Caco-2 (cell line): ENCODE measurements at regions of chr1 and their contacts with region 1.

Region 1: DNA sequence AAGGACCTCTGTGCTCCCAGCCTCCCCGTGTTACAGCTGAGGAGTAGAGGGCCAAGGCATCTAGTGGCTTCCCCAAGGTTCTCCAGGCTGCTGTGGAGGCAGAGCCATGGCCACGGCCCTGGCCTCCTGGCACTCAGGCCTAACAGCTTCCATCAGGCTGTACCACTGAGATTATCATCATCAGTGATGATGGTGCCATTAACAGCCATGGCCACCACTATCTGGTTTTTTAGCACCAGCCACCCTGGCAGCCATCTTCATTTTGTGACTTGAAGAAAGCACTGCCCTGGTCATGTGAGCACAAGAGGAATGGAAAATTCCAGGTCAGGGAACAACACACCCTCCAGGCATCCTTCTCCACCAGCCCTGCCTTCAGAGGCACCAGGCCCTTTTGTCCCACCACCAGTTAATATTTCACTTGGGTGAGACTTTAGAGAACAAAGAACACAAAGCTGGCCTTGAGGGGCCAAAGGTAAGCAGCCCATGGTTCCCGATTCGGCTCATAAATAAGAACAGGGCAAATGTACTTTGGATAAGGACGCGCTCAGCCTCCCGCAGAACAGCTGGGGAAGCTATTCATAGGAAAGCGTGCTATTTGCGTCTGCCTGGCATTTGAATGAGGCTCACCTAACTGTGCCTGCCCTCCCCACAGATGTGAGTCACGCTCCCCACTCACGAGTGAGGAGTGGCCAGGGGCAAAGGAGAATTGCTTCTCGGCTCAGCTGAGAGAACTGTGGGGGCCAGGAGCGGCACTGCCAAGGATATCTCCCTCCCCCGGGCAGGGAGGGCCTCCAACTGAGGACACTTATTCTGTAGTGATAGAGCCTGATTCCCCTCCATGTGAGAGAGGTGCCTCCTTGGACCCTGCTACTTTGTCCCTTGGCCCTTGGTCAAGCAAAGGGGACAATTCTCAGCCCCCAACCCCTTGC is 95.6 kb downstream of the CD58 start:
- DNase-seq: peak; percentile 85 to 92
- H3K4me3 ChIP-seq: peak overlapping the region; percentile 5; the same call in 1 of the 2 replicates
- H3K4me3 Mint-ChIP-seq: peak overlapping the region; percentile 49
- H3K27ac Mint-ChIP-seq: peak overlapping the region; percentile 70
- H3K4me1 ChIP-seq: peaks cover 65% of the 10 kb centered on the region
- H3K4me1 Mint-ChIP-seq: peaks cover 30% of the 10 kb centered on the region
- H3K27me3 ChIP-seq: no peaks in the 10 kb centered on the region
- H3K27me3 Mint-ChIP-seq: no peaks in the 10 kb centered on the region
- CTCF ChIP-seq: no peak

Region 2: GRCh38 chr1:116151739-116152576 is 323.2 kb before region 1 on chr1:
- CTCF ChIA-PET with region 1: no interaction called
- POLR2A ChIA-PET with region 1: no interaction called
- intact Hi-C with region 1: no loop called
- DNase-seq: peak; percentile 68 to 80
- H3K4me3 ChIP-seq: peak overlapping the region; percentile 38
- H3K4me3 Mint-ChIP-seq: peak overlapping the region; percentile 66
- H3K27ac Mint-ChIP-seq: peak overlapping the region; percentile 75
- H3K4me1 ChIP-seq: peaks cover 40% of the 10 kb centered on the region
- H3K4me1 Mint-ChIP-seq: peaks cover 9% of the 10 kb centered on the region
- H3K27me3 ChIP-seq: no peaks in the 10 kb centered on the region
- H3K27me3 Mint-ChIP-seq: no peaks in the 10 kb centered on the region
- CTCF ChIP-seq: peak; percentile 46 to 79

Region 3: DNA sequence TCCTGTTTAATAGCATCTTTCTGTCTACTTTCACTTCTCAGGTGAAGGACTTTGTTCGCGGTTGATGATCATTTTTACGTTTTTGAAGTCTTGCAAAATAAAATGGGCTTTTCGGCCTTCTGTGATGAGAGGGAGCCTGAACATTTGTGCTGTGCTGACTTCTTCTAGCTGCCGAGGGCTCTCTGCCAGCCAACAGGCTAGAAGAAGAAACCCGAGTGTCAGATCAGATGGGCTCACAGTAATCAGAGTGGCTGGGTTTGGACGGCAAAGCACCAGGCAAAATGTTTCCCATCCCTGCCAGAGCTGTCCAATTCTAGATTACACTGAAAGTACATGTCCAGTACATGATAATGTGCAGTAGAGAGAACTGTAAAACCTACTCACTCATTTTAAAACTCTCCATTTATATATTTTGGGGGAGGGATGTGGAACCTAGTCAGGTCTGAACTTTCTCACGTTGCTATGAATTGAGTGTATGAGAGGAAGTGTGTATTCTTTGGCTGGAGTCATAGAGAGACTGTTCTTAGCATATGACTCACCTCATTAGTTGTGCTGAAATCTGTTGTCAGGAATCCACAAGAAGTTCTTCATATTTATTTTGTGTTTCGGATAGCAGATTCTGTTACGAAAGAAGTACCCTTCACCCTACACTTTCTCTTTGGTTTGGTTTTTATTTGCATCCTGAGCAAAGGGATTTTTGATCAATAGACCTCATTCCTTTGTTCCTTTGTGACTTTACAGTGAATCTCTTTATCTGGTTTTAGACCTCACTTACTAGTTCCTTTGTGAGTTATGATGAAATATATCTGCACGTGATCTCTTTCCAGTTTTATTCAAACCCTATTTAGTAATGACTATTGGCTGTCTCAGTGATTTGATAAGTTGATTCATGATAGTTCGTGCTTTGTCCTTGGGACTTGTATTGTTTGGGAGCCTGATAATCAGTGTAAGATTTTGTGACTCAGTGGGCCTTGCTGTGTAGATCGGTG is 97.3 kb before region 1 on chr1:
- CTCF ChIA-PET with region 1: interaction called, 6 read pairs
- POLR2A ChIA-PET with region 1: no interaction called
- intact Hi-C with region 1: loop called (anchors 5 kb)
- DNase-seq: no peak
- H3K4me3 ChIP-seq: no peak overlapping the region
- H3K4me3 Mint-ChIP-seq: peak overlapping the region; percentile 27
- H3K27ac Mint-ChIP-seq: peak overlapping the region; percentile 63
- H3K4me1 ChIP-seq: peaks cover 62% of the 10 kb centered on the region
- H3K4me1 Mint-ChIP-seq: peaks cover 40% of the 10 kb centered on the region
- H3K27me3 ChIP-seq: no peaks in the 10 kb centered on the region
- H3K27me3 Mint-ChIP-seq: no peaks in the 10 kb centered on the region
- CTCF ChIP-seq: no peak

Region 4: GRCh38 chr1:116433275-116434257 is 41.6 kb before region 1 on chr1:
- CTCF ChIA-PET with region 1: no interaction called
- POLR2A ChIA-PET with region 1: interaction called, 4 read pairs
- intact Hi-C with region 1: loop called (anchors 5 kb)
- DNase-seq: no peak
- H3K4me3 ChIP-seq: no peak overlapping the region
- H3K4me3 Mint-ChIP-seq: peak overlapping the region; percentile 15
- H3K27ac Mint-ChIP-seq: peak overlapping the region; percentile 48
- H3K4me1 ChIP-seq: peaks cover 27% of the 10 kb centered on the region
- H3K4me1 Mint-ChIP-seq: peaks cover 24% of the 10 kb centered on the region
- H3K27me3 ChIP-seq: no peaks in the 10 kb centered on the region
- H3K27me3 Mint-ChIP-seq: no peaks in the 10 kb centered on the region
- CTCF ChIP-seq: no peak

Region 5: DNA sequence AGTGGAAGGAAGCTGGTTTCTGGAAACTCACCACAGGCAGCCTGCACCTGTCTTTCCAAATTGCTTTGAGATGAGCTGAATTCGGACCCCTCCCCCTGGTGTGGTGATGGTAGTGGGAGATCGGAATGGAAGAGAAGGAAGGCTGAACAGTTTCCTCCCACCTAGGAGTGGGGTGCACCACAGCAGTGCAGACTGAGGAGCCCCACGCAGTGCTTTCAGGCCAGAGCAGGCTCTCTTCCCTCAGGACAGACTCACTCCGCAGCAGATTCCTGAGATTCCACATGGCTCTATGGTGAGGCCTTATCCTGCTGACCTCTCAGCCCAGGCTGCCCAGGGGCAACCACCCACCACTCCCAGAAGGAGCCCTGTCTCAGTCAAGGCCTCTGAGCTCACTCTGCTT is 21.3 kb before region 1 on chr1:
- CTCF ChIA-PET with region 1: no interaction called
- POLR2A ChIA-PET with region 1: interaction called, 4 read pairs
- intact Hi-C with region 1: loop called (anchors 1 kb)
- DNase-seq: peak; percentile 66 to 85
- H3K4me3 ChIP-seq: no peak overlapping the region
- H3K4me3 Mint-ChIP-seq: peak overlapping the region; percentile 36
- H3K27ac Mint-ChIP-seq: peak overlapping the region; percentile 93
- H3K4me1 ChIP-seq: peaks cover 60% of the 10 kb centered on the region
- H3K4me1 Mint-ChIP-seq: peaks cover 32% of the 10 kb centered on the region
- H3K27me3 ChIP-seq: no peaks in the 10 kb centered on the region
- H3K27me3 Mint-ChIP-seq: no peaks in the 10 kb centered on the region
- CTCF ChIP-seq: no peak